ENCODE measurements at regions of chr16 and their contacts with region 1.

Region 1: DNA sequence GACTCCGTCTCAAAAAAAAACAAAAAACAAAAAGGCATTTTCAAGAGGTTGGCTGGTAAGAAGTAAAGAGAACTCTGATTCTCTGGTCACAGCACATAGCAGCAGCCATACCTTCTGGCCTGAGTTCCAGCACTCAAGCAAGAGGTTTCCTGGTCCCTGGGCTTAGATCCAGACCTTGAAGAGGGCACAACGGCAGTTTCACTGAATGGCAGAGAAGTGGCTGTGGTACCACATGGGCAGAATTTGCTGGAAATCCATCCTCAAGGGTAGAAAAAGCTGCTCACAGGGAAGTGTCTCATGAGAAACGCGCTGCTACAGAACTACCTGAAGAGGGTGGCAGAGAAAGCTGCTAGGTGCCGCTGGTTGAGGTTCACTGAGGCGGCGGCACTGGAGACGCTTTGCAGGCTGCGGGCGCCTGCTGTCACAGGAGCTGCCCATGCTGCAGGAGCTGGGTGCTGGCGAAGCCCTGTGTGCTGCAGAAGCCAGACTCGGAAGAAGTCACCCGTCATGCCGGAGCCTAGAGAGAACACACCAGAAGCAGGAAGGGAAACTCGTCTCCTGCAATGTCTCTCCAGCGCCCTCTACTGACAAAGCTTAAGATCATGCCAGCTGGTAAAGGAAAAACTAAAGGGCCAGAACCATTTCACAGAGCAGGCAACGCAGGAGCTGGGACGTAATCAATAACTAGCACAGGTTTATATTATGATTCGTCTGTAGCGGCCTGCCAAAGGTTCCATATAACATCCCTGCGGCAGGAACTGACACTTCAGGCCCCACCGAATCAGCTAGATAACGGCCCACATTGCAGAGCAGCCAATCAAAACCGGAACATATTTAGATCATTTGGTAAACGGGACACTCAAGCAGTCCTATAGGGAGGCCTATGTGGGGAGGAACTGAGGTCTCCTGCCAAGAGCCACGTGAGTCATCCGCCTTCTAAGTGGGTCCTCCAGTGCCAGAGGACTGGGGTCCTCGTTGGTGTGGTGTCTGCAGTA is 5.4 kb upstream of the ZNF213 start:
- DNase-seq: peak; percentile 82
- H3K4me3 Mint-ChIP-seq: peak overlapping the region; percentile 91
- H3K27ac Mint-ChIP-seq: peak overlapping the region; percentile 87
- H3K4me1 Mint-ChIP-seq: peaks cover 66% of the 10 kb centered on the region
- H3K27me3 Mint-ChIP-seq: no peaks in the 10 kb centered on the region

Region 2: DNA sequence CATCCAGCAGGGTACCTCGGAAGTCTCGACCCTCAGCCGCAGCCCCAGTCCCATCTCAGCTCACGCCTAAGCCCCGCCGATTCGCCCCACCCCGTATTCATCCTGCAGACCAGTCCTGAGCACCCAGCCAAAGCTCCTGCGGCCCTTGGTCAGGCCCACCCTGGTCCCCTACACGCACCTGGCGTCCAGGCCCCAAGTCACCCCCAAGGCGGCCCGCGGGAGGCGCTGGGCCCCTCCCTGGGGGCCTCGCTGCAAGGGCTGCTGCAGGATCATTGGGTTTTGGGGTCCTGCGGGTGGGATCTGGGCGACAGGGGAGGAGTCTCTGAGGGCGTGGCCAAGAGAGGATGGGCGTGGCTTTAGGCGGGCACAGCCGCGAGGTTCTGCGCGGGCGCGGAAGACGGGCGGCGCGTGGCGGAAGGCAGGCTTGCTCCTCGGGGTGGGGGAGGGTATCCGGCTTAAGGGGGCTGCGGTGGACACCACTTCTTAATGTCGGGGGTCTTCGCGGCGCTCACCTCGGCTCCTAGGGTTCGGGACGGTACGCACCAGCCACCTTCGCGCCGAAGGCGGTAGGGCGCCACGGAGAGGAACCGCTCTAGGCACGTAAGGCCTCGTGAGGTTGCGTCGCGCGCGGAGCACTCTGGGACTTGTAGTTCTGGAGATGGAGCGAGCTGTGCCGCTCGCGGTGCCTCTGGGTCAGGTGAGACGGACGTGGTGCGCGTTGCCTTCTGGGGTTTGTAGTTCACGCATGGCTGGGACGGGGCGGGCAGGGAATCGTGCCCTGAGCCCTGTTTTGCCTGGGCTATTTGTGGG is 105.6 kb before region 1 on chr16 and contains the starts of genes HCFC1R1 and THOC6:
- CTCF ChIA-PET with region 1: interaction called, 193 read pairs
- POLR2A ChIA-PET with region 1: interaction called, 9 read pairs
- DNase-seq: peak; percentile 97
- H3K4me3 Mint-ChIP-seq: peak within 1 kb of the TSS; percentile 73
- H3K27ac Mint-ChIP-seq: peak within 1 kb of the TSS; percentile 83
- H3K4me1 Mint-ChIP-seq: peaks cover 58% of the 10 kb centered on the region
- H3K27me3 Mint-ChIP-seq: peaks cover 5% of the 10 kb centered on the region
- total RNA-seq, gene HCFC1R1: 37.0 to 43.3 TPM
- total RNA-seq, gene THOC6: 42.4 TPM

Region 3: DNA sequence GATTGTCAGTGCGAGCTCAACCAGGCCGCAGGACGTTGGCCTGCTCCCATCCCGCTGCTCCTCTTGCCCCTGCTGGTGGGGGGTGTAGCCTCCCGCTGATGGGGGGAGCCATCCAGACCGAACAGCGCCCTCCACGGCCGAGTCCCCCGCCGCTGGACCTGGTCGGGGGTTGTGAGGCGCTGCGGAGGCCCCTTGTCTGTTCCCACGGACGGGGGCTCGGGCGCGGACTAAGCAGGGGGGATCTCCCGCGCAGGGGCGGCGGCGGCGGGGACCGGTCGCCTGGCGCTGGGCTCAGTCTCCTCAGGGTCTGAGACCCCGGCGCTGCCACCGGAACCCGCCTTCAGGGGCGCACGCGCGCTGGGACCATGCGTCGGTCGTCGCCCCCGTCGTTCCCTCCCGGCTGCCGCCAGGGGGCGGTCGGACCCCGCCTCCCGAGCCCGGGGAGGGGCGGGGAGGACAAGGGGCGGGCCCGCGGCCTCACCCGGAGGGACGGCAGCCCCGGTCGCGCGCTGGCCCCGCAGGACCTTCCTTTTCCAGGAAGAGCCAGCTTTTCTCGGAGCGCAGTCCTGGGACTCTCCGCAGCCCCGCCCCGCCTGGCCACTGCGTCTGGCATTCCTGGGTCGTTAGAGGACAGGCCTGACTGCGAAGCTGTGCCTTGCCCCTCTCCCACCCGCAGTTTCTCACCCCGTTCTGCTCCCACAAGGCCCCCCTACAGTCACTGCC is 70.3 kb before region 1 on chr16:
- CTCF ChIA-PET with region 1: interaction called, 177 read pairs
- POLR2A ChIA-PET with region 1: interaction called, 100 read pairs
- DNase-seq: peak; percentile 90
- H3K4me3 Mint-ChIP-seq: peak overlapping the region; percentile 79
- H3K27ac Mint-ChIP-seq: peak overlapping the region; percentile 95
- H3K4me1 Mint-ChIP-seq: peaks cover 74% of the 10 kb centered on the region
- H3K27me3 Mint-ChIP-seq: no peaks in the 10 kb centered on the region

Region 4: DNA sequence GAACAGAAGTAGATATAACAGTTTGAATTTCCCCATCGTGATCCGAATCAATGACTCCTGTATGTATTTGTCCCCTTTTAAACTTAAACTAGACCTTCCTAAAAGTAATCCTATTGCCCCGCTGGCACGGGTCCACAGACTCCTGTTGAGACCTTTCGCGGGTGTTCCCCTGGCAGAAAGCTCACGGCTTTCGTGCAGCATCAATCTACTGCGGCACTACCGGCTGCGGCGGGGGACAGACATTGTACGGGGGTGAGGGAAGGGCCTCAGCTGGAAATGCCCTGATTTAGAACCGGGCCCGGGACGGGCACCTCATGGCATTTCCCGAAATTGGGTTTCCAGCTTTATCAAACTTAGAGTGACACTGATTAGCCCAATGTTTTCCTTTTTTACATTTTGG is 49.4 kb before region 1 on chr16:
- CTCF ChIA-PET with region 1: interaction called, 62 read pairs
- POLR2A ChIA-PET with region 1: interaction called, 35 read pairs
- DNase-seq: no peak
- H3K4me3 Mint-ChIP-seq: no peak overlapping the region
- H3K27ac Mint-ChIP-seq: peak overlapping the region; percentile 9
- H3K4me1 Mint-ChIP-seq: peaks cover 63% of the 10 kb centered on the region
- H3K27me3 Mint-ChIP-seq: no peaks in the 10 kb centered on the region

Region 5: GRCh38 chr16:3099732-3100499 is 29.5 kb before region 1 on chr16:
- CTCF ChIA-PET with region 1: interaction called, 254 read pairs
- POLR2A ChIA-PET with region 1: interaction called, 14 read pairs
- DNase-seq: peak; percentile 96
- H3K4me3 Mint-ChIP-seq: peak overlapping the region; percentile 75
- H3K27ac Mint-ChIP-seq: peak overlapping the region; percentile 80
- H3K4me1 Mint-ChIP-seq: peaks cover 66% of the 10 kb centered on the region
- H3K27me3 Mint-ChIP-seq: no peaks in the 10 kb centered on the region

Region 6: GRCh38 chr16:3118204-3118806 is 11.1 kb before region 1 on chr16:
- CTCF ChIA-PET with region 1: interaction called, 14 read pairs
- POLR2A ChIA-PET with region 1: interaction called, 5 read pairs
- DNase-seq: no peak
- H3K4me3 Mint-ChIP-seq: no peak overlapping the region
- H3K27ac Mint-ChIP-seq: no peak overlapping the region
- H3K4me1 Mint-ChIP-seq: peaks cover 6% of the 10 kb centered on the region
- H3K27me3 Mint-ChIP-seq: peaks cover 12% of the 10 kb centered on the region

Region 7: GRCh38 chr16:3158471-3159314 is 29.3 kb after region 1 on chr16:
- CTCF ChIA-PET with region 1: interaction called, 33 read pairs
- POLR2A ChIA-PET with region 1: interaction called, 20 read pairs
- DNase-seq: peak; percentile 96
- H3K4me3 Mint-ChIP-seq: peak overlapping the region; percentile 91
- H3K27ac Mint-ChIP-seq: peak overlapping the region; percentile 95
- H3K4me1 Mint-ChIP-seq: peaks cover 44% of the 10 kb centered on the region
- H3K27me3 Mint-ChIP-seq: peaks cover 23% of the 10 kb centered on the region